Activated naive CD4-positive, alpha-beta T cell treated with anti-CD3 and anti-CD28 coated beads for 36 hours (primary cell): ENCODE measurements at regions of chr1 and their contacts with region 1.

Region 1: DNA sequence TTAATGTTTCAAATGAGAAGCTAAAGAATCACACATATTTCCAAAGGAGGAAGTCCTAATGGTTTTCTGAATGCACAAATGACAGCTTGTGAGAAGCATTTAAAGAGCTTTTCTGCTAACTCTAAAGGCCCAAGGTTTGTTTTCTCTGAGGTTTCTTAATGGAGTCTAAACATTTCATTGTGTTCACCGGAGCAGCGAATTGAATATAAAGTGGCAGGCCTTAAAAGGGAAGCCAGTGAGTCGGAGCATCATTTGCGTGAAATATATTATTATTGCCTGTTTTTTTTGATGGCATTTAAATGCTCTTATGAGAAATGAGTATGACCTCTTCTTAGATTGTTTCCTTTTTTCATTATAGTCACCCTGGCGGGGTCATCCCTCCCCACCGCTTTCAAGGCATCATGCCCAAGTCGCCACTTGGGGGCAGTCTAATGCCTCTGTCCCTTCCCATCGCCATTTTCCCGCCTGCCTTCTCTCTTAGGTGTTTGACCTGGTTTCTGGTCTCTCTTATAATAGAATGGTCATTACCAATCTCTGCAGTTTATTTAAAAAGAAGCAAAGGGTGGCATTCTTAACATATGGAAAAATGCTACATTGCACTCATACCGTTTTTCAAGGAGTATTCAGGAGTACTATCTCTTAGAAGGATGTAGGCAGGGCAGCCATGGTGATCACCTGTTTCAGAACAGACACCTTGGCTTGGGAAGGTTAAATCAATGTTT is 25.3 kb upstream of the OVAAL start:
- DNase-seq: peak; percentile 87
- H3K4me3 Mint-ChIP-seq: no peak overlapping the region
- H3K27ac Mint-ChIP-seq: no peak overlapping the region
- H3K4me1 Mint-ChIP-seq: no peaks in the 10 kb centered on the region
- H3K27me3 Mint-ChIP-seq: no peaks in the 10 kb centered on the region

Region 2: GRCh38 chr1:180515864-180516388 is 17.5 kb before region 1 on chr1:
- CTCF ChIA-PET with region 1: interaction called, 8 read pairs
- intact Hi-C with region 1: loop called (anchors 1 kb)
- DNase-seq: peak; percentile 76
- H3K4me3 Mint-ChIP-seq: no peak overlapping the region
- H3K27ac Mint-ChIP-seq: no peak overlapping the region
- H3K4me1 Mint-ChIP-seq: peaks cover 3% of the 10 kb centered on the region
- H3K27me3 Mint-ChIP-seq: peaks cover 3% of the 10 kb centered on the region

Region 3: DNA sequence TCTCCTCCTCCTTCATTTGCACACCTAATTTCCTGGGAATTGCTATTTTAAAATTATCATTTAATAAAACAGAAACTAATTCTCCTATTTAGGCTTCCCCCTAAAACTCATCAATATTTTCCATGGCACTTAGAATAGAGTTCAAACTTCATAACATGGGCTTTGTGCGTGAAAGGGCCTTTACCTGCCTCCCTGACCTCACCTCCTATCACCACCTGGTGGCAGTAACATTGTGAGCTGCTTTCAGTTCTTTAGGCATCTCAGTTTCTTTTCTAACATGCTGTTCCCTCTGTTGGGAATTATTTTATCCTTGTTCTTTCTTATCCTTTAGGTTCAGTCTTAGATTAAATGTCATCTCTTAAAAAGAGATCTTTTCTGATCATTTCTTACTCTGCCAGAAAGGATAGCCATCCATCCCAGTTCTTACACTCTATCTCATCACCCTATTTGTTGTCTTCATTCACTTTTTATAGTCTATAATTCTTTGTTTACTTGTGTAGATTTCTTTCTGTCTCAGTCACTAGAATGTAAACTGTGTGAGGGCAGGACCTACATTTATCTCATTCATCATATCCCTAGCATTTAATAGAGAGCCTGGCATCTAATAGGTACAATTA is 245.5 kb after region 1 on chr1:
- CTCF ChIA-PET with region 1: no interaction called
- intact Hi-C with region 1: loop called (anchors 5 kb)
- DNase-seq: peak; percentile 9
- H3K4me3 Mint-ChIP-seq: no peak overlapping the region
- H3K27ac Mint-ChIP-seq: no peak overlapping the region
- H3K4me1 Mint-ChIP-seq: peaks cover 6% of the 10 kb centered on the region
- H3K27me3 Mint-ChIP-seq: no peaks in the 10 kb centered on the region

Region 4: DNA sequence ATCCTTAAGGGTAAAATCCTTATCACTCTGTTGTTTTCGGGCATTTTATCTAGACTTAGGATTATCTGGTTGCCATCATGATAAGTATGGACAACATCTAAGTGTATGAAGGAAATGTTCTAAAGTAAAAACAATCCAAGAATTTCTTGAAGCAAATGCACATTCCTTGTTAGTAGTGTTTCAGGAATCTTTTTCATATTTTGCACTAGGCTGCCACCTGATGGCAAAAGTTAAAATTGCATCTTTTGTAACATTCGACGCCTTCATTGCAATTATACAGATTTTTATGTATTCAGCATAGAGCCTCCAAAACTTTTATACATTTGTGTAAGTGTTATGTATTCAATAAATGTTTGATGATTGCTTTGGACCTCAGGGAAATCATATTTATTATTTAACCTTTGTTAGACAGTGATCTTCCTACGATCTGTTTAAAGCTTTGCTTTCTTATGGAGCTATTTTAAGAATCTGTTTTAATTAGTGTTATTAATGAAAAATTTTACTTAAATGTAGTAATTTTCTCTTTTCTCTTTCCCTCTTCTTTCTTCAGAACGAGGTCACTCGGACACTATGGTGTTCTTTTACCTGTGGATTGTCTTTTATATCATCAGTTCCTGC is 329.8 kb after region 1 on chr1:
- CTCF ChIA-PET with region 1: interaction called, 141 read pairs
- intact Hi-C with region 1: loop called (anchors 1 kb)
- DNase-seq: peak; percentile 34
- H3K4me3 Mint-ChIP-seq: no peak overlapping the region
- H3K27ac Mint-ChIP-seq: no peak overlapping the region
- H3K4me1 Mint-ChIP-seq: peaks cover 2% of the 10 kb centered on the region
- H3K27me3 Mint-ChIP-seq: no peaks in the 10 kb centered on the region

Region 5: GRCh38 chr1:180981596-180982387 is 448.4 kb after region 1 on chr1:
- CTCF ChIA-PET with region 1: no interaction called
- intact Hi-C with region 1: loop called (anchors 10 kb)
- DNase-seq: peak; percentile 68
- H3K4me3 Mint-ChIP-seq: no peak overlapping the region
- H3K27ac Mint-ChIP-seq: peak overlapping the region; percentile 46
- H3K4me1 Mint-ChIP-seq: peaks cover 30% of the 10 kb centered on the region
- H3K27me3 Mint-ChIP-seq: no peaks in the 10 kb centered on the region